Heart left ventricle (tissue), 16 donors: ENCODE measurements at regions of chr16 and their contacts with region 1.

Region 1: DNA sequence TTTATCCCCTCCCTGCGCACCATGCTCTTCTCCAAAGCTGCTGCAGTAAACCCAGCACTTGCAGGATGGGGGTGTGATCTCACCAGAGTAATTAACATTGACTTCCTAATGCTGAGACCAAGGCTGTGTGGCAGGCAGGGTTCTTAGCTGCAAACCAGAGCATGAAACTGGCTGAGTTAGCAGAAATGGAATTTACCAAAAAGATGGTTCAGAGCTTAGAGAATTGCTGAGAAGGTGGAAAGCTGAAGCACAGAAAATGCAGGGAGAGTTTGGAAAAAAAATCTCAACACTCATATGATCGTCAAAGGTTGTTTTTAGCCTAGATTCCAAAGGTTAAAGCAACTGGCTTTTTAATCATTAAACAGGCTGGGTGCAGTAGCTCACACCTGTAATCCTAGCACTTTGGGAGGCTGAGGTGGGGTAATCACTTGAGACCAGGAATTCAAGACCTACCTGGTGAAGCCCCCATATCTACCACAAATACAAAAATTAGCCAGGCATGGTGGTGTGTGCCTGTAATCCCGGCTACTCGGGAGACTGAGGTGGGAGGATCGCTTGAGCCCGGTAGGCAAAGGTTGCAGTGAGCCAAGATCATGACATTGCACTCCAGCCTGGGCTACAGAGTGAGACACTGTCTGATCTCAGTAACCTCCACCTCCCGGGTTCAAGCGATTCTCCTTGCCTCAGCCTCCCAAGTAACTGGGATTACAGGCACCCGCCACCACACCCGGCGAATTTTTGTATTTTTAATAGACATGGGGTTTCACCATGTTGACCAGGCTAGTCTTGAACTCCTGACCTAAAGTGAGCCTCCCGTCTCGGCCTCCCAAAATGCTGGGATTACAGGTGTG is 6.0 kb upstream of the TXNDC11 start:
- DNase-seq: no peak
- ATAC-seq: no peak
- H3K4me3 ChIP-seq: no peak overlapping the region
- H3K27ac ChIP-seq: peak overlapping the region in 1 of 12 donors; percentile 4
- H3K4me1 ChIP-seq: peaks cover 0 to 5% (median under 1%) of the 10 kb centered on the region in 12 donors
- H3K27me3 ChIP-seq: no peaks in the 10 kb centered on the region
- CTCF ChIP-seq: no peak
- POLR2A ChIP-seq: no peak

Region 2: DNA sequence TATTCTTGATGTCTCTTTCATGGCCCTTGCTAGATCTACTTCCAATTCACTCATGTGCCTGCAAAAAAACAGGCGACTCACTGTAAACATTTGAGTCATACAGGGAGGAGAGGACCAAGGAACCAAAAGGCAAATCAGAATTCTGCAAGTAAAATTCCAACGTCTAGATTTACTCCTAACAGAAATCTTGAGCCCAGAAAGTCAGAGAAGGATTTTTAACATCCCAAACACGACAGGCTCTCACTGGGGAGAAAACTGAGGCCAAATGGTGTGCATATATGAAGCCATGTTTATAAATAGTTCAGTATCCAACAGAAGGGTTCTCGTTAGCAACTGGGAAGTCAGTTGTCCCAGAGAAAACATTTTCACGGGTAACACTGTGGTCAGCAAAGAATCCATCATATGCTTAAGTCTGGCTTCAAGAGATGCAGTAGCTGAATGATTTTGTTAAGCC is 202.0 kb before region 1 on chr16:
- intact Hi-C with region 1: no loop called
- DNase-seq: no peak
- ATAC-seq: no peak
- H3K4me3 ChIP-seq: no peak overlapping the region
- H3K27ac ChIP-seq: peak overlapping the region in 1 of 12 donors; percentile 49
- H3K4me1 ChIP-seq: peaks cover 0 to 9% (median 0%) of the 10 kb centered on the region in 12 donors
- H3K27me3 ChIP-seq: no peaks in the 10 kb centered on the region
- CTCF ChIP-seq: no peak
- POLR2A ChIP-seq: no peak

Region 3: DNA sequence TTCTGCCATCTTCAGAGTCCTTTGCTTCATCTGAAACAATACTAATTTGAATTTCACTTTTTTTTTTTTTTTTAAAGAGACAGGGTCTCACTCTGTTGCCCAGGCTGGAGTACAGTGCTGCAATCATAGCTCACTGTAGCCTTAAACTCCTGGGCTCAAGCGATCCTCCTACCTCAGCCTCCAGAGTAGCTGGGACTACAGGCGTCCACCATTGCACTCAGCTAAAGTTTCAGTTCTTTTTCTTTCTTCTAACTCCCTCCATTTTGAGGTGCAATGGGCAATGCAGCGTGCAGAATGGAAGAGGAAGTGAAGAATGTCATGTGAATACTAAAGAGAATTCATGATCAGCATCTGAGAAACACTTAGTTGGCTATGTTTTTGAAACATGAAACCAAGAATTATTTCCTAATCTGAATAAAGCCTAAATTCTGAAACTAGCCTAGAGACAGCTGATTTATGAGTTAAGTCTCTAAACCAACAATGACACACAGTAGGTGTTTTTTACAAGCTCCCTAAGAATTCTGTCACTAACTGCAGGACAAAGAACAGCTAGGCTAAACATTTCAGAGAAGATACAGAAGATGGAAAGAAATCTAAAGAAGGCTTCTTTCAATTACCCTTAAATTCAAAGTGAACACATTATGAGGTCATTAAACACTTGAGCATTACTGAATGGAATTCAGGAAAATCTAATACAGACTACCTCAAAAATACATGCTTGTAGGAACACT is 59.4 kb before region 1 on chr16:
- intact Hi-C with region 1: no loop called
- DNase-seq: no peak
- ATAC-seq: peak in 3 of 4 donors; percentile 6 to 32 (median 23)
- H3K4me3 ChIP-seq: no peak overlapping the region
- H3K27ac ChIP-seq: peak overlapping the region in 9 of 12 donors; percentile 3 to 83 (median 16)
- H3K4me1 ChIP-seq: peaks cover 0 to 44% (median 28%) of the 10 kb centered on the region in 12 donors
- H3K27me3 ChIP-seq: no peaks in the 10 kb centered on the region
- CTCF ChIP-seq: no peak
- POLR2A ChIP-seq: no peak

Region 4: GRCh38 chr16:11783319-11784037 is 34.8 kb after region 1 on chr16:
- intact Hi-C with region 1: loop called in 2 of 10 experiments (anchors 5 kb)
- DNase-seq: no peak
- ATAC-seq: peak; percentile 12 to 50 (median 26)
- H3K4me3 ChIP-seq: peak overlapping the region in 10 of 12 donors; percentile 6 to 41 (median 25)
- H3K27ac ChIP-seq: peak overlapping the region; percentile 48 to 93 (median 80)
- H3K4me1 ChIP-seq: peaks cover 9 to 75% (median 38%) of the 10 kb centered on the region in 12 donors
- H3K27me3 ChIP-seq: no peaks in the 10 kb centered on the region
- CTCF ChIP-seq: no peak
- POLR2A ChIP-seq: no peak